Left ventricle myocardium superior (tissue), 1 donor: ENCODE measurements at regions of chr4 and their contacts with region 1.

Region 1: DNA sequence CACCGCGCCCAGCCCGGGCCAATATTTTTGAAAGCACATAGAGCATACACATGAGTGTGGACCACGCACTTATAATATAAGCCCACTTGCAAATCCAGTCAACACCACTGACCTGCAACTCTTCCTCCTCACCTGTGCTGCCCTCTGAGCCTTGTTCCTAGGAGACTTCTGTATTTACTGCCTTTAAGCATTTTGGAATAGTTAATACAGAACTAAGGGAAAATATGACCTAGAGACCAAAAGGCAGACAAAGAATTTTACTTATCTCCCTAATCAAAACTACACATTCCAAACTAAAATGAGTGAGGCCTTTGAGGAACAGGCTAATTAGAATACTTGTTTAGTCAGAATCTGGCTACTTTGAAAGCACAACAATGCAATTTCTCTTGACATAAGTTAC is 89.1 kb downstream of the RELL1 start:
- DNase-seq: no peak
- ATAC-seq: no peak

Region 2: DNA sequence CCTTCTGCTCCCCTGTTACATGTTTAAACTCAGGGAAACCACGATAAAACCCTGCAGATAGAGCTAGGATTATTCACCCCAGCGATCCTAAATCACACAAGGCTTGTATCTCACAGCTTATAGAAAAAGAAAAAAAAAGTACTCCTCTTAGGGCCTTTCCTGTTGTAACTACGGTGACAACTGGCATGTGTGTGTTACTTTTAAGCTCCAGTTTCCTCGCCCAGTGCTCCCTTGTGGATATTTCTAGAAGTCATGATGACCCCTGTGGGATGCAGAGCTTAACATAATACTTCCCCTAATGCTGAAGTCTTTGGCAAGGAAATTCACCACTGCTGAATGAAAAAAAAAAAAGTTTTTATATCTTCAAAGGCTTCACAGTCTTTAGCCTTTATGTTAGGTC is 237.8 kb before region 1 on chr4:
- intact Hi-C with region 1: no loop called
- DNase-seq: no peak
- ATAC-seq: no peak

Region 3: DNA sequence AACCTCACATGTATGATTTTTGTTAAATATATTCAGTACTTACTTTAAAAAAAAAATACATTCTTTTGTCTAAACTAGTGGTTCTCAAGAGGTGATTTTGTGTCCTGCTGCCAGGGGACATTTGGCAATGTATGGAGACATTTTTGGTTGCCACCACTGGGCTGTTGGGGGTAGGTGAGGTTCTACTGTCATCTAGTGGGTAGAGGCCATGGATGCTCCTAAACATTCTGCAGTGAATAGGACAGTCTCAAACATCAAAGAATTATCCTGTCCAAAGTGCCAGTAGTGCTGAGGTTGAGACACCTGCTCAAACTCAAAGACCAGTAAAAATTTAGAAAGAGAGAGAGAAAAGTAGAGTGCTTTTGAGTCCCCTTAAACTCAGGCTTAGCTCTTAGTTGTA is 196.5 kb after region 1 on chr4:
- intact Hi-C with region 1: loop called (anchors 5 kb)
- DNase-seq: no peak
- ATAC-seq: peak; percentile 82

Region 4: DNA sequence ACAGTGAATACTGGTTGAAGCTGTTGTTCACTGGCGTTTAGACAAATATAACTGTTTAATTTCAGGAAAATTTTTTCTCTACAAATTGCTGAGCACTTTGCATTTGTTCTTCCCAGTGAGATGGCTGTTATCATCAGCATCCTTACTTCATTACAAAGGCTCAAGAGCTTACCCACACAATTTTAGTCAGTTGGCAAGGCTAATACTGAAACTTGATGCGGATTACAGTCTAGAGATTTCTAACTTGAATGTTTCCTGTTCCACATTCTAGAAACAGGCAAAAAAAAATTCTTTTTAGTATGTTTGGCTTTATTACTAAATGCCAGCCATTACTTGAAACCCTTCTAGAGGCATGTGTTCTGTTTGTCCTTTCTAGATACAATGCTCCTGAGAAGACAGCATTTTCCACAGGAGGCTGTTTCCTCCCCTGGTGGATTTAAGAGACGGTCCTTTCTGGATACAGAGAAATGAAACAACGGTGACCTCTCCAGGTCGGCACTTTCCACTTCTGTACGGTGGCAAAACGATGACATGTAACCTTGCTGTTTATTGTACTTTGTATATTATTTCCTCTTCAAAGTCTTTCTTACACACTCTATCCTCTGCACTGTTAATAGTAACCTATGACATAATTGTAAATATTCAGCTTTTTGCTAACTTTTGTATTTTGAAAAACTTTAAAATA is 1688.2 kb after region 1 on chr4:
- intact Hi-C with region 1: no loop called
- DNase-seq: no peak
- ATAC-seq: no peak